Activated CD8-positive, alpha-beta memory T cell treated with anti-CD3 and anti-CD28 coated beads, Interleukin-2, amount 10 ng/mL, durations not matched to agents 7 days and 5 days (primary cell): ENCODE measurements at regions of chrX and their contacts with region 1.

Region 1: DNA sequence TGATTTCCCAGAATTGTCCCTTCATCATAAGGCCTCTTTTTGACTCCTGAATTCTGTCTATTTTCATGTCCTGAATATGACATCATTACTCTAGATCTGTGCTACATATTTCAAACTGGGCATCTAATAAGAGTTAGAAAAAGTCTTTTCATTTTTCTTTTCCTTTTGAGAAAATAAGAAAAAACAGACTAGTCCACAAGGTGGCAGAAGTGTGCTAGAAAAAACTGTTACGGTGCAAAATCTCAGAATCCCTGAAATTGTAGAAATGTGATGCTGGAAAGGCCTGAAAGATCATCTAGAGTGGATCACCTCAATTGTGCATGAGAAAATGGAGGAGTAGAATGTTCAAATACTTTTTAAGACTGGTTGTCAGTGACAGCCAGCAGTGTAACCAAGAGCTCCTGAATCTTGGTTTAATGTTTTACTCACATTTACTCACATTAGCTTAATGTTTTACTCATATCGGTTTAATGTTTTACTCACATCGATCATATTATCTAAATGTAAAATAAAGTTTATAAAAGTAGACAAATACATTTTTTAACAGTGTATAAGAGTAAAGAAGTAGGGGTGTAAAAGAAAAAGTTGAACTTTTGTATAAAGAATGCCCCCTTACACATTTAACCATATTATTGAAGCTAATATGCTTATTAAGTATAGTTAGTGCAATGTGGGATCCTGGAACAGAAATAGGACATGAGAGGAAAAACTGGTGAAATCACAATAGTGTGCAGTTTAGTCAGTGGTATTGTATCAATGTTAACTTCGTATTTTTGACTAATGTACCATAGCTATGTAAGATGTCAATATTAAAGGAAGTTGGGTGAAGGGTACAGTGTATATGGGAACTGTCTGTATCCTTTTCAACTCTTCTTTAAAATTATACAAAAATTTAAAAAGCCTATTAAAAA is 15.2 kb downstream of the ASB11 start:
- DNase-seq: no peak
- ATAC-seq: no peak
- H3K4me3 Mint-ChIP-seq: no peak overlapping the region
- H3K27ac Mint-ChIP-seq: no peak overlapping the region
- H3K4me1 Mint-ChIP-seq: peaks cover 18% of the 10 kb centered on the region
- H3K27me3 Mint-ChIP-seq: peaks cover 2% of the 10 kb centered on the region

Region 2: DNA sequence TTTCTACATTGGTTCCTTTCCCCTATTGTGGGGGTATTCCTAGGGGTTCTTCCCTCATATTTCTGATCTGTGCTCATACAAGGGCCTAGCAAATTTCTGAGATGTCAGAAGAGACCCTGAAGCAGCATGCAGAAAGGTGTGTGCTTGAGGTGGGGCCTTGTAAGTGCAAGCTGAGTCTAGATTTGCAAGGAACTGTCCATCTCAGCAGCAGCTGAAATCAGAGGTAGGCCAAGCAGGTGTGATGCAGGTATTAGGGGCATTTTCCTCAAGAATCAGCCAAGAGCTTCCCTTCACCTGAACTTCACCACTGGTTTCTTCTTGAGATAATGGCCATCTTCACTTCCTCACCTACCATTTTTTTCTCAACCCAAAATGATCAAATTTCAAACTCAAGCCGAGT is 75.4 kb before region 1 on chrX:
- CTCF ChIA-PET with region 1: no interaction called
- DNase-seq: no peak
- ATAC-seq: no peak
- H3K4me3 Mint-ChIP-seq: no peak overlapping the region
- H3K27ac Mint-ChIP-seq: no peak overlapping the region
- H3K4me1 Mint-ChIP-seq: no peaks in the 10 kb centered on the region
- H3K27me3 Mint-ChIP-seq: no peaks in the 10 kb centered on the region

Region 3: DNA sequence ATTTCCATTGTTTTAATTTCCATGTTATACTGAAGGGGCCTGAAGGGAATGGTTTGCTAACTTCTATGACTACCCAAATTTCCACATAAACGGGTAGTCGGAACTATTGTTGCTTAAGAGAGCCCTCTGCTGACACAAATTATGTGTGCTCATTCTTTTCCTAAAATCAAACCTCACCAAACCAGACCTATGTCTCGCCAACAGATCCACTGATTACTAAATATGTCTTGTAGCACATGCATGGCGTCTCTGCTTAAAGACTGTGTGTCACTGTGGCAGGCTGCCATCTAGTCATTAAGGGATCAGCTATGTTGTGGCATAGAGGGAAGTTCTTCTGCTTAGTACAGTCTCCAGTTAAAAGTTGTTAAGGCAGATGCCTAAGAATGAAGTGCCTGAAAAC is 167.8 kb after region 1 on chrX:
- CTCF ChIA-PET with region 1: interaction called, 13 read pairs
- DNase-seq: no peak
- ATAC-seq: no peak
- H3K4me3 Mint-ChIP-seq: no peak overlapping the region
- H3K27ac Mint-ChIP-seq: no peak overlapping the region
- H3K4me1 Mint-ChIP-seq: peaks cover 2% of the 10 kb centered on the region
- H3K27me3 Mint-ChIP-seq: peaks cover 7% of the 10 kb centered on the region